AG04449 (cell line): ENCODE measurements at regions of chr7 and their contacts with region 1.

Region 1: DNA sequence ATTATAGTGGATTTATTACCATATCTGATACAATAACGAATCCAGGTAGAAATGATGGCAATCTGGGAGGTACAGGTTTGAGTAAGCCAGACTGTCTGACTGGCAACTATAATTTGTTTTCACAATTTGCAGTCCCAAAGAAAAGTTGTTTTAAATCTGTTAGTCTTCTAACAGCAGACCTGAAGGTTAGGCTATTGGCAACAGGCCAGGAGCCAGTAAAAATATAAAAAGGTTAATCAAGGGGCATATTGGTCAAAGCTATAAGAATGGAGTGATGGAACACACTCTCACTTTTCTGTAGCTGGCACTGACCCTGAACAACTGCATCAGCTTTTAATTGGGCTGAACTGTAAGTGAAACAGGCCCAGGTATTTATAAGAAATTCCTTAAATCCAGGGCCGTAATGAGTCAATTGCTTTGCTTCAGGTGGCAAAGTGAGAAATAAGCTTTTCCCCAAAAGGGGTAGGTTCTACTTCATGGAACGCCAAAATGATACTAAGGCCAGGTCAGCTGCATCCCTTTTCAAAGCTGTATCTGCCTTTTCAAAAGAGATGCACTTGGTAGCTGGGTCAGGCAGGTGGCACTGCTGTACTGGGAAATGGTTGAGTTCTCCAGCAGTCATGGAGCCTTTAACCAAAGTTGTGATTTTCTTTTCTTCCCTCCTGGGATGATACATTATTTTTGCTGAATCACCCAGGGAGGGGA is 7.0 kb upstream of the GPR22 start:
- DNase-seq: no peak
- H3K4me3 ChIP-seq: no peak overlapping the region
- CTCF ChIP-seq: peak; percentile 79

Region 2: DNA sequence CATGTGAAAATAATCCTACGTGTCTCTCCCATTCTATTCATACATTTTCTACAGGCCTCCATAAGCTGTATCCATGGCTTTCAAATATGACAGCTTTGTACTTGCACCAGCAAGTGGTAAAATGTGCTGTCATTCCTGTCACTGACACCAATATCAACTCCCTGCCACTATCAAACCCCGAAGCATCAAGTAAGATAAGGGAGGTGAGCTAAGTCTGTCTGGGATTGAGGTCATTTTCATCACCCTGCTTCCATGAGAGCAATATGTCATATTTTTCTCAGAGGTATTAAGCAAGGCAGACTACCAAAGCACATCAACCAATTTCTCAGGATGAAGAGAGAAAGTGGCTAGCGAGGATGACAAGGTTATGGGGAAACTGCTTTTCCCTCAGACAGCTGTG is 18.0 kb after region 1 on chr7:
- CTCF ChIA-PET with region 1: interaction called, 13 read pairs
- POLR2A ChIA-PET with region 1: no interaction called
- DNase-seq: no peak
- H3K4me3 ChIP-seq: no peak overlapping the region
- CTCF ChIP-seq: no peak

Region 3: DNA sequence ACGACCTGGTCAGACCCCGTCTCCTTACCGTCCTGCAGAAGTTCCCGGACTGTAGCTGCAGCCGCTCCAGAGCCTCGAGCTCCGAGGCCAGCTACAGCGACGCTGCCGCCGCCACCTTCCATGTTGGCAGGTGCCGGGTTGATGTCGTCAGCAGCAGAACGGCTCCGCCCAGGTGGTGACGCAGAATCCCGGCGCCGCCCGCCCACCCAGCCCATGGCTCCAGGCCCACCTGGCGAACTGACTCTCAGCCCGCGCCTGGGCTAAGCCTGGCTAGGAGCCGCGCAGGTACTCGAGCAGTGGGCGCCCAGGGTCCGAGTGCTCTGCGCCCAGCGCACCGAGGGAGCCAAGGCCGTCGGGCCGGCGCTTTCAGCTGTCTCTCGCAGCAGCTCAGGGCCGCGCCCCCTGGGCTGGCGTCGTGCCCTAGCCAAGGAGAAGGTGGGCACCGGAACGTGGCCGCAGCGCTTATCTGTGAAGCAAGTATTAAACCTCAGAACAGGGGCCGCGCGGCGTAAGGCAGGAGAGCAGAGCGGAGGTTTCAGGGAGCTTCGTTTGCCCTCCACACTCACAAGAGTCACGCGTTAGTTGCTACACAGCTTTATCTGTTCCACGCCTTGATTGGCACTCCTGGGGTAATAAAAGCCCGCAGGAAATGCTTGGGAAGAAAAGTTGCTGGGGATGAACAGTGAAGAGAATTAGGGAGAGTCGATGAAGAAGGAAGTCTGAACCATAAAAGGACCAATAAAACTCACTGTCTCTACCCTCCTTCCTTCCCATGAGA is 101.1 kb after region 1 on chr7 and contains the starts of genes COG5 and DUS4L:
- CTCF ChIA-PET with region 1: interaction called, 11 read pairs
- POLR2A ChIA-PET with region 1: no interaction called
- DNase-seq: no peak
- H3K4me3 ChIP-seq: peak within 1 kb of the TSS; percentile 91
- CTCF ChIP-seq: no peak

Region 4: GRCh38 chr7:107725151-107725740 is 262.4 kb after region 1 on chr7:
- CTCF ChIA-PET with region 1: interaction called, 106 read pairs
- POLR2A ChIA-PET with region 1: no interaction called
- DNase-seq: peak; percentile 12
- H3K4me3 ChIP-seq: no peak overlapping the region
- CTCF ChIP-seq: peak; percentile 41

Region 5: GRCh38 chr7:107879400-107880035 is 416.6 kb after region 1 on chr7:
- CTCF ChIA-PET with region 1: interaction called, 38 read pairs
- POLR2A ChIA-PET with region 1: no interaction called
- DNase-seq: no peak
- H3K4me3 ChIP-seq: no peak overlapping the region
- CTCF ChIP-seq: peak; percentile 64